Activated T-helper 2 cell treated with anti-CD3 and anti-CD28 coated beads, Interferon-gamma antibody, Interleukin-2, Interleukin-4, amounts not matched to agents 10 μg/mL and 5 μg/mL and 100 μg/mL, durations not matched to agents 14 hours and 24 hours and 36 hours (primary cell): ENCODE measurements at regions of chr9 and their contacts with region 1.

Region 1: GRCh38 chr9:124126571-124127289 is 115.2 kb downstream of the LHX2 start:
- DNase-seq: peak; percentile 67
- H3K4me3 Mint-ChIP-seq: no peak overlapping the region
- H3K27ac Mint-ChIP-seq: no peak overlapping the region
- H3K4me1 Mint-ChIP-seq: peaks cover 8% of the 10 kb centered on the region
- H3K27me3 Mint-ChIP-seq: peaks cover 4% of the 10 kb centered on the region

Region 2: DNA sequence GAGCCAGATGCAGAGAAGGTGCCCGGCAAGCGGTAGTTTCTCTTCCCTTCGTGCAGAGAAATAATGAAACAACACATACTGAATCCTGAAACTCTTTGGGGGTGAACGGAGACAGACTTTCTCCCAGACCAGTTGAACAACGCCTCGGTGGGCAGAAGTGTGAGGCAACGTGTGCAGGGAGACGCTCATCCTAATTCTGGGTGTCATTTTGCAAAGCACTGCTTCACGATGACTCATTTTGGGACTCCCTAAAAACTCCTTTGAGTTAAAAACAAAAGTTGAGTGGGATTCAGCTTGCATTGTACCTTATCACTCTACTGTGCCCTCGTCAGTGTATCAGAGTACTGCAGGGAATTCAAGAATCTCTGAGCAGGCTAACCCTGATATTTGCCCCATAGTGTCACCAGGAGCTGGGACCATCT is 127.5 kb after region 1 on chr9:
- intact Hi-C with region 1: loop called (anchors 2 kb)
- DNase-seq: peak; percentile 27
- H3K4me3 Mint-ChIP-seq: peak overlapping the region; percentile 43
- H3K27ac Mint-ChIP-seq: peak overlapping the region; percentile 55
- H3K4me1 Mint-ChIP-seq: peaks cover 60% of the 10 kb centered on the region
- H3K27me3 Mint-ChIP-seq: no peaks in the 10 kb centered on the region

Region 3: DNA sequence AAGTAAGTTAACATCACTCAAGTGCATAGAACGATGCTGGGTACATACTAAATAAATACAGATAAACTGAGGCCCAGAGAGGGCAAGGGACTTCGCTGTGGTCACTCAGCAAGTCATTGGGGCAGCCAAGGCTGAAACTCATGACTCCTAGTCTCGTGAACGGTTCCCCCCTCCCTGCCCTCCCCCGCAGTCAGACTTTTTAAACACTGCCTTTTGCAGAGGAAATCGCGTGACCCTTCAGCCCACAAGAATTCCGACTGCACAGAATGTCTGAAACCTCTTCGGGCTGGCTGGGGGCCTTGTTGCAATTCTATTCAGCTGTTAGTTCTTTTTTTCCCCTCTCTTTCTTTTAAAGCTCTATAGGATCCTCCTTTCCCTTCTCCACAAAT is 159.2 kb after region 1 on chr9:
- intact Hi-C with region 1: loop called (anchors 2 kb)
- DNase-seq: peak; percentile 27
- H3K4me3 Mint-ChIP-seq: peak overlapping the region; percentile 77
- H3K27ac Mint-ChIP-seq: peak overlapping the region; percentile 97
- H3K4me1 Mint-ChIP-seq: peaks cover 47% of the 10 kb centered on the region
- H3K27me3 Mint-ChIP-seq: no peaks in the 10 kb centered on the region

Region 4: GRCh38 chr9:124320062-124320973 is 193.6 kb after region 1 on chr9:
- intact Hi-C with region 1: loop called (anchors 2 kb)
- DNase-seq: peak; percentile 21
- H3K4me3 Mint-ChIP-seq: no peak overlapping the region
- H3K27ac Mint-ChIP-seq: no peak overlapping the region
- H3K4me1 Mint-ChIP-seq: peaks cover 5% of the 10 kb centered on the region
- H3K27me3 Mint-ChIP-seq: no peaks in the 10 kb centered on the region

Region 5: GRCh38 chr9:124392871-124393460 is 266.2 kb after region 1 on chr9:
- intact Hi-C with region 1: loop called (anchors 1 kb)
- DNase-seq: no peak
- H3K4me3 Mint-ChIP-seq: no peak overlapping the region
- H3K27ac Mint-ChIP-seq: no peak overlapping the region
- H3K4me1 Mint-ChIP-seq: peaks cover 31% of the 10 kb centered on the region
- H3K27me3 Mint-ChIP-seq: no peaks in the 10 kb centered on the region